GM12878 (cell line): ENCODE measurements at regions of chr20 and their contacts with region 1.

Region 1: GRCh38 chr20:17946572-17947473 is 21.8 kb downstream of the SNX5 start:
- DNase-seq: no peak
- ATAC-seq: peak; percentile 7; the same call in 2 of the 3 replicates
- H3K4me3 ChIP-seq: no peak overlapping the region
- H3K27ac ChIP-seq: no peak overlapping the region
- H3K4me1 ChIP-seq: peaks cover 22% of the 10 kb centered on the region
- H3K27me3 ChIP-seq: no peaks in the 10 kb centered on the region
- CTCF ChIP-seq: no peak
- EP300 ChIP-seq: no peak
- POLR2A ChIP-seq: no peak
- RAD21 ChIP-seq: no peak

Region 2: GRCh38 chr20:17958373-17959256 is 11.8 kb after region 1 on chr20:
- CTCF ChIA-PET with region 1: interaction called, 44 read pairs
- POLR2A ChIA-PET with region 1: interaction called, 3 read pairs
- RAD21 ChIA-PET with region 1: interaction called, 5 read pairs
- SMC1A ChIA-PET with region 1: interaction called, 10 read pairs
- in situ Hi-C with region 1: no loop called
- intact Hi-C with region 1: no loop called
- DNase-seq: no peak
- ATAC-seq: peak; percentile 2; the same call in 2 of the 3 replicates
- H3K4me3 ChIP-seq: peak overlapping the region; percentile 86; the same call in 1 of the 2 replicates
- H3K27ac ChIP-seq: peak overlapping the region; percentile 54
- H3K4me1 ChIP-seq: peaks cover 48% of the 10 kb centered on the region
- H3K27me3 ChIP-seq: no peaks in the 10 kb centered on the region
- CTCF ChIP-seq: no peak
- EP300 ChIP-seq: no peak
- POLR2A ChIP-seq: no peak
- RAD21 ChIP-seq: no peak